ENCODE measurements at regions of chr3 and their contacts with region 1.

Region 1: GRCh38 chr3:50192689-50193141 is 1.3 kb downstream of the GNAT1 start:
- DNase-seq: peak; percentile 85
- ATAC-seq: peak; percentile 38
- H3K4me3 Mint-ChIP-seq: no peak overlapping the region
- H3K27ac Mint-ChIP-seq: no peak overlapping the region
- H3K4me1 Mint-ChIP-seq: peaks cover 10% of the 10 kb centered on the region
- H3K27me3 Mint-ChIP-seq: peaks cover 25% of the 10 kb centered on the region

Region 2: DNA sequence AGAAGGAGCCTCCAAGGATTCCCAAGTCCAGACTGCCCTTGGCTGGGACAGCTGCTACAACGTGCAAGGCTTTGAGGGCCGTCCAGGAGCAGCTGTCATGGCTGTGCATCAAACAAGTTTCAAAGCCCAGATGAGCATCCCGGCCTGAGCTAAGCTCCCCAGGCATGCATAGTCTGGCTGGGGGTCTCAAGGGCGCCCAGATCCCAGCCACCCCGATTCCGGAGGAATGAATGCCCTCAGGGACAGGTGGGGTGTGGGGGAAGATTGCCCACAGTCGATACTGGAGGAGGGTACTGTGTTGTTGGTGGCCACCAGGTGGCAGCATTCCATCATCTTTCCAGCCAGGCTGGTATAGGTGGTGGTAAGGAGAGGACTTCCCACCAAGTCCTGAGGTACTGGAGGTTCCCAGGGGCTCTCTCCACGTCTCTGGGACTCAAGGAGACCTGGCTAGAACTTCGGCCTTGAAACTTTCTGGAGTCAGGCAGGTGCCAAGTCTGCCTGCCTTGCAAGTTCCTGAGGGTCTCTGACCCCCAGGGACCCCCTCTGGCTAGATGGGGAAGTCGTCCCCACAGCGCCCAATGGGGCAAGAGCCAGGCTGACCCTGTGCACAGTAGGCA is 71.2 kb before region 1 on chr3:
- CTCF ChIA-PET with region 1: interaction called, 30 read pairs
- DNase-seq: peak; percentile 78
- ATAC-seq: peak; percentile 85
- H3K4me3 Mint-ChIP-seq: no peak overlapping the region
- H3K27ac Mint-ChIP-seq: no peak overlapping the region
- H3K4me1 Mint-ChIP-seq: no peaks in the 10 kb centered on the region
- H3K27me3 Mint-ChIP-seq: no peaks in the 10 kb centered on the region

Region 3: DNA sequence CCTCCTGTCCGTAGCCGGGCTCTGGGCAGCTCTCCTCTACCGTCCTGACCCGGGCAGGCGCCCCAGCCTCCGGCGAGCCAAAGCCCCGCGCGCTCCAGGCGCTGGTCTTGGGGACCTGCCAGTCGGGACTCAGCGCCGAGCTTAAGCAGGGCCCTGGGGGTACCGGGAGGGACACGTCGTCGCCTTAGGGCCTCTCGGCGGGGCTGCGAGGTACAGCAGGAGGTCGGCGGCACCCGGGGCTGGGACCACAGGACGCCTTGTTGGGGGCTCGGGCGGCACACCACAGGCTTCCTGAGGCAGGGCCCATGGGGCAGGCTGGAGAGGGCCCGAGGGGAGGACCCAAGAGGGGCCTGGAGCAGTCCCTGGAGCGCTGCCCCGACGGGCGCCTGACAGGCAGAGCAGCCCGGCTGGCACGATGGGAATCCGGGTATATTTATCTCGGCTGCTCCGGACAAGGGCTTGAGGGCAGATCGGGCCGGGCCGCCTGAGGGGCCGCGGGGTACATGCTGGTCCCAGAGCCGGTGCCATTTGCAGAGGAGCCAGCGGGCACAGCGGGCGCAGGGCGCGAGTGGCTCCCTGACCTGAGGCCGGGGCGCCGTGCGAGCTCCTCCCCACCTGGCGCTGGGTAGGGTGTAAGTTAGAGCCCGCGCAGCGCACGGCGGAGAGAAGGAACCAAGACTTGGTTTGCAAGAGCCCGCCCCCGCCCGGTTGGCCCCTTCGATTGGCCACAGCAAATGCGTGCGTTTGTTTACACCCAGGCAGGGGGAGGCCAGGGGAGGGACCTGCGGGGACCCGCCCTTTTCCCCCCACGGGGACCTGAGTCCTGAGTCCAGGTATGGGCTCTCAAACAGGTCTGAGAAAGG is 12.9 kb after region 1 on chr3:
- CTCF ChIA-PET with region 1: interaction called, 95 read pairs
- DNase-seq: peak; percentile 50
- ATAC-seq: peak; percentile 52
- H3K4me3 Mint-ChIP-seq: no peak overlapping the region
- H3K27ac Mint-ChIP-seq: no peak overlapping the region
- H3K4me1 Mint-ChIP-seq: no peaks in the 10 kb centered on the region
- H3K27me3 Mint-ChIP-seq: peaks cover 57% of the 10 kb centered on the region

Region 4: DNA sequence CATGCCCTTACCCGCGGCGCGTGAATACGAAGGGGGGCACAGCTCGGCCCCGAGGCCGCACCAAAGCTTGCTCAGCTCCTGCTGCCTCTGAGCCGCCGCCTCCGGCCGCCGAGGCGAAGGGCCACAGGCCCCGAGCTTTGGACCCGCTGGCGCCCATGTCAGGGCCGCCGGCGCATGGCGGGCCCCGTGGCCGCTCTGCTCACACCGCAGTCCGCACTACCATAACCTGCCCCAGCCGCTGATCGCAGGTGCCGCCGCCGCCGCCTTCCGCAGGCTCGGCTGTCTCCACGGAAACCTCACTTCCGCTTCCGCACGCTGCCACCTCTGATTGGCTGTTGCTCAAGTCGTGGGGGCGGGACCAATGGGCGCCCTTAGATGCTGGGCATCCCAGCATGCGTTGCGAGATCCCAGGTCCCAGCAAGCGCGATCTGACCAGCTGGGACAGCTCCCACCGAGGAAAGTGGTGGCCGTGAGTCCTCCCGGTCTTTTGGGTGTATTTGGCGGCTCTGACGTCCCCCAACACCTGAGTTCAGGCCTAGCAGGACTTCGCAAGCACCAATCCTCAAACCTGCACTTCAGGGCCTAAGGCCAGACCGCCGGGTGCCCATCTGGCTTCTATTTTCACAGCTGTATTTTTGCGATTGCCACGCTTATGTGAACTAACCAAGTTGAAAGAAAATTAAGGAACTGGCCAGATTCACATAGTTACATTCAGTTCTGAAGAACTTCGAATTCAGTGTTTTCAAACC is 135.4 kb after region 1 on chr3 and contains the start of gene TUSC2:
- CTCF ChIA-PET with region 1: interaction called, 10 read pairs
- DNase-seq: peak; percentile 98
- ATAC-seq: peak; percentile 92
- H3K4me3 Mint-ChIP-seq: peak within 1 kb of the TSS; percentile 78
- H3K27ac Mint-ChIP-seq: peak within 1 kb of the TSS; percentile 81
- H3K4me1 Mint-ChIP-seq: peaks cover 33% of the 10 kb centered on the region
- H3K27me3 Mint-ChIP-seq: no peaks in the 10 kb centered on the region
- total RNA-seq, gene TUSC2: 20.4 to 25.0 TPM

Measured in activated CD8-positive, alpha-beta memory T cell treated with anti-CD3 and anti-CD28 coated beads, Interleukin-2, amount 10 ng/mL, durations not matched to agents 7 days and 5 days (primary cell).